ENCODE measurements at regions of chr6 and their contacts with region 1.

Region 1: GRCh38 chr6:26520853-26521599 is 17.1 kb upstream of the HMGN4 start:
- DNase-seq: peak; percentile 57 to 90
- H3K4me3 ChIP-seq: peak overlapping the region; percentile 56 to 75
- H3K27ac ChIP-seq: peak overlapping the region; percentile 98 to 99
- H3K4me1 ChIP-seq: peaks cover 3 to 10% of the 10 kb centered on the region in 2 donors
- H3K27me3 ChIP-seq: no peaks in the 10 kb centered on the region
- CTCF ChIP-seq: no peak

Region 2: GRCh38 chr6:25922301-25922700 is 598.7 kb before region 1 on chr6:
- intact Hi-C with region 1: no loop called
- DNase-seq: peak in 1 of 2 donors; percentile 74
- H3K4me3 ChIP-seq: no peak overlapping the region
- H3K27ac ChIP-seq: peak overlapping the region; percentile 27 to 67
- H3K4me1 ChIP-seq: peaks cover 0 to 5% of the 10 kb centered on the region in 2 donors
- H3K27me3 ChIP-seq: no peaks in the 10 kb centered on the region
- CTCF ChIP-seq: no peak

Region 3: DNA sequence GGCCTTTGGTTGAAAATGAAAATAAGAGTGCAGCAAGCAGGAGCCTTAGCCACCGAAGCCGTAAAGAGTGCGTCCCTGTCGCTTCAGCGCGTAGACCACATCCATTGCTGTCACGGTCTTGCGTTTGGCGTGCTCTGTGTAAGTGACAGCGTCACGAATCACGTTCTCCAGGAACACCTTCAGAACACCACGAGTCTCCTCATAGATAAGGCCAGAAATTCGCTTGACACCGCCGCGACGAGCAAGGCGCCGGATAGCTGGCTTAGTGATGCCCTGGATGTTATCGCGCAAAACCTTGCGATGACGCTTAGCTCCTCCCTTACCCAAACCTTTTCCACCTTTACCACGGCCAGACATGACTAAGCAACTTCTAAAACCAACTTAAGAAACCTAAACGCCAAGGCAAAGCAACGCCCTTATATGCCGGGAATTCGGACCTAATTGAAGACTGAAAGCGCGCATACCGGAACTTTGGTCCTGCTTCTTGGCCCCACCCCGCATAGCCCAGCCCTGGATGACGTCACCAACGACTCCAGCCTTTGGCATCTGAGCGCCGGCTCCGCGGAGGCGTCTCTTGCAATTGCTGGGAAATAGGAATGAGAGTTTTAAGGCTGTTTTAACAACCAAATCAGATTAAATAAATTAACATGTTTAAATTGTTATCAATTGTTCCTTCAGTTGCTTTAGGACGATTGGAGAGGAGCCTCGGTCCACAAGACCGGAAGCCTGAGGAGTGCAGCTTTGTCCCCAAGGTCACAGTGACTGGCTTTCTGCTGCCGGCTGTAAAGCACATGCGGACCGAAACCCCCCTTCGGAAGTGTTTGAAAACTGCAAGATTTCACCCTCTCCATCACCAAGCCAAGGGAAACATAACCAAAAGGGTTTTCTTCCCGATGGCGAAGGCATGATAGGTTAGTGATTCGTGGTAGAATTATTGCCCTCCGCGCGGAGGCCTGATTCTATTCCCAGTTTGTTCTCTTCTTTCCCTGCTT is 235.6 kb before region 1 on chr6:
- intact Hi-C with region 1: loop called (anchors 1 kb)
- DNase-seq: peak; percentile 92 to 99
- H3K4me3 ChIP-seq: peak overlapping the region; percentile 71 to 79
- H3K27ac ChIP-seq: peak overlapping the region; percentile 93 to 97
- H3K4me1 ChIP-seq: no peaks in the 10 kb centered on the region
- H3K27me3 ChIP-seq: no peaks in the 10 kb centered on the region
- CTCF ChIP-seq: no peak

Region 4: DNA sequence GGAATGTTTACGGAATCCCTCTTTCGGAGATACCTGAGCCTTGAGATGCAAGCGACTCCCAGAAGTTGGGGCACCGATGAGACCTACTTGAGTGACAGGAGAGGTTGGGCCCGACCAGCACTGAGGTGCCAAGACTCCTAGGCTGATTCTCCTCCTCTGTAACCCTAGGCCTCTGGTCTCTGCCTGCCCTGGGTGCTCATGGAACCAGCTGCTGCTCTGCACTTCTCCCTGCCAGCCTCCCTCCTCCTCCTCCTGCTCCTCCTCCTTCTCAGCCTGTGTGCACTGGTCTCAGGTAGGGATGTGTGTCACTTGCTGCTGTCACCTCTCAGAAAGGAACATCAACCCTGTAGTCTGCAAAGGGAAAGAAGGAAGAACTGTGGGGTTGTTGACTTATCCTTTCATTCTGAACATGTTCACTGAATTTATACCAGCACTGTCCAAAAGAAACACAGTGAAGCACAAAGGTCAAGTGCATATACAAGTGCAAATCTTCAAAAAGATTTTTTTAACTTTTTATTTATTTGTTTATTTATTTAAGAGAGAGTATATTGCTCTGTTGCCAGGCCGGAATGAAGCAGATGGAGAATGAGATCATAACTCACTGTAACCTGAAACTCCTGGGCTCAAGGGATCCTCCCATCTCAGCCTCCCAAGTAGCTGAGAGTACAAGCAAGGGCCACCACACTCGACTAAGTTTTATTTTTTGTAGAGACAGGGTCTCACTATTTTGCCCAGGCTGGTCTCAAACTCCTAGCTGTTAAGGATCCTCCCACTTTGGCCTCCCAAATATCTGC is 137.2 kb before region 1 on chr6:
- intact Hi-C with region 1: loop called (anchors 5 kb)
- DNase-seq: peak in 1 of 2 donors; percentile 66
- H3K4me3 ChIP-seq: peak overlapping the region; percentile 69 to 76
- H3K27ac ChIP-seq: peak overlapping the region; percentile 67 to 68
- H3K4me1 ChIP-seq: peaks cover 0 to 2% of the 10 kb centered on the region in 2 donors
- H3K27me3 ChIP-seq: no peaks in the 10 kb centered on the region
- CTCF ChIP-seq: no peak

Region 5: DNA sequence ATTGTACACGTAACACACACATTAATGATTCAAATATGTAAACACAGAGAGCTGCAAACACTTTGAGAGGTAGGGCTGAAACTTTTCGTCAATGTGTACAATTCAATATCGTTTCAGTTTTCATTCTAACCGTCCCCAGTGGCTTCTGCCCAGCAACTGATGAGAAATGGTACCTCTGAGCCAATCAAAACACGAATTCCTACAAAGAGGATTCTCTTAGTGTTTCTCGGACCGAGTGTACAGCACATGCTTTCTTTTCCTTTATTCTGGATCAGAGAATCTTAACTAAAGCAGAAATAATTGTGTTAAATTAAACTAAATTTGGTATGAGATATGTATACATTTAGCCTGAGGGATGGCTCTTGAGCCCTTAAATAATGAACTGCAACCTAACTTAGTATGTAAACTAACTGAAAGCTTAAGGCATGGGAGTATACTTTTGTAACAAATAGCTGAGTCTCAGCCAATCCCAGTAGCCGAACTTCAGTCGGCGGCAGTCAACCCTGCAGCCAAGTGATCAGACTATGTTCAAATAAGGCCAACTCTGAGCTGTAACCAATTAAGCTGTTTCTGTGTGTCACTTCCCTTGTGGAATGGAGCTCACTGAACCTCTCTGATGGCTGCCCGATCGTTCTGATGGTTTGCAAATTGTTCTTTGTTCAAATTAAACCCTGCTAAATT is 47.1 kb before region 1 on chr6:
- intact Hi-C with region 1: loop called (anchors 1 kb)
- DNase-seq: peak; percentile 68 to 92
- H3K4me3 ChIP-seq: peak overlapping the region; percentile 57 to 64
- H3K27ac ChIP-seq: peak overlapping the region; percentile 91
- H3K4me1 ChIP-seq: peaks cover 6 to 9% of the 10 kb centered on the region in 2 donors
- H3K27me3 ChIP-seq: no peaks in the 10 kb centered on the region
- CTCF ChIP-seq: no peak

Region 6: GRCh38 chr6:26537846-26538571 is 17.0 kb after region 1 on chr6 and contains the start of gene HMGN4:
- intact Hi-C with region 1: loop called (anchors 1 kb)
- DNase-seq: peak in 1 of 2 donors; percentile 90
- H3K4me3 ChIP-seq: peak within 1 kb of the TSS; percentile 89 to 98
- H3K27ac ChIP-seq: peak within 1 kb of the TSS; percentile 92 to 99
- H3K4me1 ChIP-seq: peaks cover 5 to 32% of the 10 kb centered on the region in 2 donors
- H3K27me3 ChIP-seq: no peaks in the 10 kb centered on the region
- CTCF ChIP-seq: peak in 1 of 3 experiments; percentile 12
- total RNA-seq, gene HMGN4: 20.6 TPM

Region 7: GRCh38 chr6:26568601-26569432 is 47.8 kb after region 1 on chr6:
- intact Hi-C with region 1: loop called (anchors 2 kb)
- DNase-seq: peak; percentile 80 to 97
- H3K4me3 ChIP-seq: peak overlapping the region; percentile 61 to 73
- H3K27ac ChIP-seq: peak overlapping the region; percentile 62 to 71
- H3K4me1 ChIP-seq: peaks cover 0 to 4% of the 10 kb centered on the region in 2 donors
- H3K27me3 ChIP-seq: no peaks in the 10 kb centered on the region
- CTCF ChIP-seq: peak in 1 of 3 experiments; percentile 33

Region 8: GRCh38 chr6:27479319-27480182 is 958.5 kb after region 1 on chr6:
- intact Hi-C with region 1: loop called (anchors 2 kb)
- DNase-seq: peak; percentile 53 to 93
- H3K4me3 ChIP-seq: peak overlapping the region; percentile 77 to 94
- H3K27ac ChIP-seq: peak overlapping the region; percentile 98 to 99
- H3K4me1 ChIP-seq: no peaks in the 10 kb centered on the region
- H3K27me3 ChIP-seq: no peaks in the 10 kb centered on the region
- CTCF ChIP-seq: no peak